ENCODE measurements at regions of chr19 and their contacts with region 1.

Region 1: DNA sequence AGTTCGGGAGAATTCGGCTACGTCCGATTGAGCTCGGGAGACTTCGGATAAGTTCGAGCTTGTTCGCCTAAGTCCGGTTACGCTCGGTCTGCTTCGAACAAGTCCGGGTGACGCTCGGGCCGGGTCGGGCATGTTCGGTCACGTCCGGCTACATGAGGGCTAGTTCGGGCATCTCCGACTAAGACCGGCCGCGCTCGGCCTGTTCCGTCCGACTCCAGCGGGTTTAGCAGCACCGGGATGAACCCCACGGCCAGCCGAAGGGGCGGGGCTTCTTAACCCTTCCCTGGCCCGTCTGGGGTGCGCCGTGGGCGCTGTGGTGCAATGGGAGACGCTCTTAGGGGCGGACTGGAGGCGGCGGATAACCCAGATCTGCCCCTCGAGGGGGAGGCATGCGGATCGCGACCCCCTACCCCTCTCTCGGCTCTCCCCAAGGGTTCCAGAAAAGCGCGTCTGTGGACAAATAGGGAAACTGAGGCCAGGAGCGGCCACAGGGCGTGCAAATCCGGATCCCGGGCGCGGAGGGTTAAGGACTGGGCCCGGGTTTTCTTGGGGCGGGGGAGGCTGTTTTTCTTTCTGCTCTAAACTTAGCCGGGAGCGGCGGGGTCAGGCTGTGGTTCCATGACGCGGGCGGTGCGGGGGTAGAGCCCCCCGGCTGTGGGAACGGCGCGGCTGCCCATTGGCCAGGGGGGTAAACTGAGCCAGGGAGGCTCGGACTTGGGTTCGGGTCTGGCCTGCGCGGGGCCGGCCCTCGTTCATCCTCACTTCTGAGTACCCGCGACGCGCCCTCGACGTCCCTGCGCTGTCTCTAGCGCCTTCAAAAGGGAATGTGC is 1.5 kb downstream of the PDE4C start:
- DNase-seq: peak; percentile 100
- ATAC-seq: peak; percentile 91
- H3K4me3 Mint-ChIP-seq: peak overlapping the region; percentile 92
- H3K27ac Mint-ChIP-seq: peak overlapping the region; percentile 100
- H3K4me1 Mint-ChIP-seq: peaks cover 30% of the 10 kb centered on the region
- H3K27me3 Mint-ChIP-seq: peaks cover 42% of the 10 kb centered on the region
- CTCF ChIP-seq: no peak

Region 2: GRCh38 chr19:17915951-17916593 is 308.7 kb before region 1 on chr19:
- CTCF ChIA-PET with region 1: no interaction called
- POLR2A ChIA-PET with region 1: no interaction called
- DNase-seq: no peak
- ATAC-seq: no peak
- H3K4me3 Mint-ChIP-seq: no peak overlapping the region
- H3K27ac Mint-ChIP-seq: no peak overlapping the region
- H3K4me1 Mint-ChIP-seq: no peaks in the 10 kb centered on the region
- H3K27me3 Mint-ChIP-seq: peaks cover 20% of the 10 kb centered on the region
- CTCF ChIP-seq: no peak

Region 3: GRCh38 chr19:18152444-18152816 is 72.3 kb before region 1 on chr19:
- CTCF ChIA-PET with region 1: interaction called, 12 read pairs
- POLR2A ChIA-PET with region 1: interaction called, 3 read pairs
- DNase-seq: peak; percentile 99
- ATAC-seq: peak; percentile 69
- H3K4me3 Mint-ChIP-seq: peak overlapping the region; percentile 72
- H3K27ac Mint-ChIP-seq: peak overlapping the region; percentile 98
- H3K4me1 Mint-ChIP-seq: peaks cover 25% of the 10 kb centered on the region
- H3K27me3 Mint-ChIP-seq: no peaks in the 10 kb centered on the region
- CTCF ChIP-seq: peak; percentile 53

Measured in WTC11 (cell line).